ENCODE measurements at regions of chr6 and their contacts with region 1.

Region 1: DNA sequence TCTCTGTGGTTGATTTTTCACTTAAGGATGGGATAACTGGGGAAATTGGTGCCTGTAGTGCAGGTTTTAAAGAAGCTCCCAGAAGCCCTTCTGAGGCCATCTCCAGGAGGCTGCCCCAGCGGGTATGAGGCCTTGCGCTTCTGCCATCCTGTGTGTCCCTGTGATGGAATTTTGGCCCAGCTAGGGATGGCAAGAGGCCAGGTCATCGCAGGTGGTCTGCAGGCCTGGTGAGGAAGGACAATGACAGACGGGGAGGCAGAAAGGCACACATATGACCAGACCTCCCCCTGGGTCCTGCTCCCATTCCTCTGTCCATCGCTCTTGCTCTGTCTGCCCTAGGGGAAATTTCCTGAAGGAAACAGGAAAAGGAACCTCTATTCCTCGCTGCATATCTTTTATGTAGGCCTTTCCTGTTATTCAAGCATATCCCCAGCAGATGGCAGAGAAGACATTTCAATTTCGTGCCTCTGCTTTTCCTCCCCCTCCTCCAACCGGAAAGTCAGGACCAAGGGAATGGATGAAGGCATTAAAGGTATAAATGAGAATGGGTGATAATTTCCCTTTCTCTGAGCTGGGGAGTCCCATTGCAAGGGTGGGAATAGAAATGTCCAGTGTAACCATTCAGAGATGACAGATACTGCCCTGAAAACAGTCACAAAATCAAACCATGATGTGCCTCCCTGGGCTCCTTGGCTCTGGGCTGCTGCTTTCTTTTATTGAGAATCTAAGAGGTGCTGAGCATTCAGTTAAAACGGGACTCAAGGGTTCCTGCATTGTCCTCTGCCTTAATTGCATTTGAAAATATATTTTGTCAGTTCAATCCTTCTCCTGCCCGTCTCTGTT is 17.6 kb upstream of the HLA-F start:
- DNase-seq: no peak
- H3K4me3 ChIP-seq: no peak overlapping the region
- H3K27ac ChIP-seq: no peak overlapping the region
- H3K4me1 ChIP-seq: no peaks in the 10 kb centered on the region
- H3K27me3 ChIP-seq: no peaks in the 10 kb centered on the region
- CTCF ChIP-seq: peak; percentile 33 to 58 (median 53)
- POLR2A ChIP-seq: no peak

Region 2: GRCh38 chr6:29834564-29835436 is 129.2 kb after region 1 on chr6:
- intact Hi-C with region 1: loop called (anchors 10 kb)
- DNase-seq: peak in 1 of 2 donors; percentile 83
- H3K4me3 ChIP-seq: no peak overlapping the region
- H3K27ac ChIP-seq: no peak overlapping the region
- H3K4me1 ChIP-seq: no peaks in the 10 kb centered on the region
- H3K27me3 ChIP-seq: no peaks in the 10 kb centered on the region
- CTCF ChIP-seq: peak in 2 of 3 experiments; percentile 57 to 67
- POLR2A ChIP-seq: no peak

Measured in vagina (tissue), 2 donors.